MCF 10A (cell line): ENCODE measurements at regions of chr4 and their contacts with region 1.

Region 1: GRCh38 chr4:48109413-48110263 is 24.4 kb downstream of the TXK start:
- DNase-seq: peak; percentile 72
- H3K4me3 Mint-ChIP-seq: no peak overlapping the region
- H3K27ac Mint-ChIP-seq: no peak overlapping the region
- H3K4me1 Mint-ChIP-seq: no peaks in the 10 kb centered on the region
- H3K27me3 Mint-ChIP-seq: no peaks in the 10 kb centered on the region
- CTCF ChIP-seq: peak; percentile 56

Region 2: GRCh38 chr4:48033825-48034413 is 75.7 kb before region 1 on chr4:
- CTCF ChIA-PET with region 1: interaction called, 11 read pairs
- POLR2A ChIA-PET with region 1: no interaction called
- intact Hi-C with region 1: no loop called
- DNase-seq: peak; percentile 50
- H3K4me3 Mint-ChIP-seq: no peak overlapping the region
- H3K27ac Mint-ChIP-seq: no peak overlapping the region
- H3K4me1 Mint-ChIP-seq: no peaks in the 10 kb centered on the region
- H3K27me3 Mint-ChIP-seq: no peaks in the 10 kb centered on the region
- CTCF ChIP-seq: peak; percentile 40

Region 3: DNA sequence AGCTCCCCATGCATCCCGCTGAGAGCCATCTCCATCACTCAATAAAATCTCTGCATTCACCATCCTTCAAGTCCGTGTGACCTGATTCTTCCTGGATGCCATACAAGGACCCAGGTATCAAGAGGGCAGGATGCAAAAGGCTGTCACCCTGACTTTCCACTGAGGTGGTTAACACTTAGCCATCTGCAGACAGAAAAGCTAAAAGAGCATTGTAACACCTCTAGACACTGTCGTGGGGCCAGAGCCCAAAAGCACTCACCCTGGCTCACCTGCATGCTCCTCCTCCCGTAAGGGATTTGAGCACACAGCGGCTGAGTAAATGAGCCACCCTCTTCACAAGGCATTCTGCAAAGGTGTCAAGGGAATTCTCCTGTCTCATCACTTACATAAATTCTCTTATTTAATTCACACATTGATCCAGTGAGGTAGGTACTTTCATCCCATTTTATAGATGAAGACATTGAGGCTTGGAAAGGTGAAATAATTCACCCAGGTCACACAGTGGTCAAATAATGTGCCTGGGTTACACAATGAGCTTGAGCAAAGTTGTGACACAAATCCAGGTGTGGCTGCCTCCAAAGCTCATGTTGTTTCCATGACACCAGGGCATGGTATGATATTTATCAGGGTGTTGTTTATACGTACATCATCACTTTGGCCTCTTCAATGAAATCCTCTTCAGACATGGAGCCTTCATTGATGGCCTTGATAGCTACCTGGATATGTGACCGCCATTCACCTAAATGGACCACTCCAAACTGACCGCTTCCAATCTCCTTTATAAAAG is 23.6 kb before region 1 on chr4:
- CTCF ChIA-PET with region 1: interaction called, 13 read pairs
- POLR2A ChIA-PET with region 1: no interaction called
- intact Hi-C with region 1: no loop called
- DNase-seq: peak; percentile 17
- H3K4me3 Mint-ChIP-seq: no peak overlapping the region
- H3K27ac Mint-ChIP-seq: no peak overlapping the region
- H3K4me1 Mint-ChIP-seq: peaks cover 6% of the 10 kb centered on the region
- H3K27me3 Mint-ChIP-seq: no peaks in the 10 kb centered on the region
- CTCF ChIP-seq: no peak

Region 4: DNA sequence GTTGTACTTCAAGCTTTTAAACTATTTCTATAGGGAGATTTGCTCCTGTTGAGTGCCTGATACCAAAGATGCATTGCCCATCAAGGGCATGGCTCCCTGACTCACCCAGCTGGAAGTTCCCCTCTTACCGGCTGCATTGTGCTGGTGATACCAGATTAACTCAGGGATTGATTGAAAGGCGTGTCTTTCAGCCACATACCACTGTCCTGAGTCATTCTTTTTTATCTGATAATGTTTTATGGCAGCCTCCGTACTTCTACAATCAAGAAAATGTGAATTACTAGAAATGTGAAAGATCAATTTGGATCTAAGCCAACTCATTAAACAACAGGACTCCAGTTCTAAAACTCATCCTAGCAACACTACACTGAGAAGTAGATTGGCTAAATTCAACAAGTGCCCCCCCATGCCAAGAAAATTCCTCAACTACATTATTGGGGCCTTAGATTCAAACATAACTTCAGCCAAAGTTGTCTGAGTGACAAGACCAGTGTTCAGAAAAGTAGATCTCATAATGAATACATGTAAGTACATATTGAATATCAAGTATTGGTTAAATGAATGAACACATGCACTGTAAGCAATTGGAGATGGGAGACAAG is 15.6 kb before region 1 on chr4:
- CTCF ChIA-PET with region 1: interaction called, 43 read pairs
- POLR2A ChIA-PET with region 1: no interaction called
- intact Hi-C with region 1: no loop called
- DNase-seq: peak; percentile 45
- H3K4me3 Mint-ChIP-seq: no peak overlapping the region
- H3K27ac Mint-ChIP-seq: no peak overlapping the region
- H3K4me1 Mint-ChIP-seq: peaks cover 8% of the 10 kb centered on the region
- H3K27me3 Mint-ChIP-seq: no peaks in the 10 kb centered on the region
- CTCF ChIP-seq: no peak

Region 5: DNA sequence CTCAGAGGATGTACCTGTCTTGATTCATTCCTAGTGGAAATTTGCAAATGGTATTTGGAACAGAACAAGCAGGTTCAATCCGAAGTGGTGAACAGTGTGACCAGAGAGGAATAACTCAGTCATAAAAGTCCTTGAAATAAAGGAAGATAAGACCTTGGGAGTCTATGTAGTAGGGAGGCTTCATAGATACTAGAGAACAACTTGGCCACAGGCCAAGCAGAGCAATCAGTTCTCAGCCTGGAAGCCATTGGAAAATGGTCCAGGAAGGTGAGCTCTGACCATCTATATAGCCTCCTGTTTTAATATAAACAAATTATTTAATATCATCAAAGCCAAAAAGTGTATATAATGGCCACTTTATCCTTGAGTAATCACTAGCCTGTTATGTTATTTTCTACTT is 13.1 kb after region 1 on chr4:
- CTCF ChIA-PET with region 1: interaction called, 19 read pairs
- POLR2A ChIA-PET with region 1: interaction called, 3 read pairs
- intact Hi-C with region 1: no loop called
- DNase-seq: peak; percentile 3
- H3K4me3 Mint-ChIP-seq: no peak overlapping the region
- H3K27ac Mint-ChIP-seq: no peak overlapping the region
- H3K4me1 Mint-ChIP-seq: no peaks in the 10 kb centered on the region
- H3K27me3 Mint-ChIP-seq: no peaks in the 10 kb centered on the region
- CTCF ChIP-seq: no peak

Region 6: DNA sequence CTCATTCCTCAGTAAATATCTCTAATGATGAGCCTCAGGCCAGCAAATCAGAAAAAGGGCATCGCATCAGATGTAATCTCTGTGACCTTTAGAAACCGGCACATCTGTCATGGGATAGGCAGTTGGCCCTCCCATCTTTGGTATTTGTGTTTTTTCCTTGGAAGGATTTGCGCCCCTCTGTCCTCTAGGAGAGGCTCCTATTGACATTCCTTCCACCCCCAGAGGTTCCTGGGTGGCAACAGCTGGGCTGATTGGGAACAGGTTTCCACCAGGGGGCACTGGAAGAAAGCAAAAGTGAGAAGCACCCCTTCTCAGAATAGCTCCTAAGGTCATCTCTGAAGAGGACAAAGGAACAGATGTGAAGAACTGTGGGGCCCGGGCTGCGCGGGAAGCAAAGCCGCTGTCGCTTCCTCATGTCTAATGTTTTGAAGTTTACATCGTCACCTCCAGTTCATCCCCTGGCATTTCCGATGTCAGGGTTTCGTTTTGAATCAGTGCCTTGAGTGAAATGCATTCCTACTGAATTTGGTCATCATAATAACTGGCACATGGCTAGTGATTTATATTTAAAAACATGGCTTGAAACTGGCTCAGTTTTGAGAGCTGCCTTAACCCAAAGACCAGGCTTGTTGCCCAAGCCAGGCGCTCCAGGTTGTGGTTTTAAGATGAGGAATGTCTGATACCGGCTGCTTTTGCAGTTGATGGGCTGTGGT is 18.2 kb after region 1 on chr4:
- CTCF ChIA-PET with region 1: interaction called, 19 read pairs
- POLR2A ChIA-PET with region 1: interaction called, 4 read pairs
- intact Hi-C with region 1: no loop called
- DNase-seq: peak; percentile 83
- H3K4me3 Mint-ChIP-seq: peak overlapping the region; percentile 70
- H3K27ac Mint-ChIP-seq: peak overlapping the region; percentile 57
- H3K4me1 Mint-ChIP-seq: peaks cover 9% of the 10 kb centered on the region
- H3K27me3 Mint-ChIP-seq: no peaks in the 10 kb centered on the region
- CTCF ChIP-seq: peak; percentile 52

Region 7: DNA sequence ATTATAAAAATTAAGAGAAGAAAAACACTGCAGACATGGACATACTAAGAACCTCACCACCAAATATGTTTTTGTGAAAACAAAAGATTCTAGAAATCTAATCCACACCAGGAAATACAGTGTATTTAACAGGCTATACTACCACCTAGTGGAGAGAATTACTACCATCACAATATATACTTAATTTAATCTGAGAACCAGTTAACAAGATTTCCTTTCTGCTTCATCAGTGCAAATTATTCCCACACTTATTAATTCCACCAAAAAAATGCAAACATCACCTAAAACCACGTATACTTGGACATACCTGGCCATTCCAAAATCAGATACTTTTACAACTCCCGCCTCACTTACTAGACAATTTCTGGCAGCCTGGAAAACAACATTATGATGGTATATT is 31.4 kb after region 1 on chr4:
- CTCF ChIA-PET with region 1: interaction called, 16 read pairs
- POLR2A ChIA-PET with region 1: no interaction called
- intact Hi-C with region 1: no loop called
- DNase-seq: peak; percentile 48
- H3K4me3 Mint-ChIP-seq: no peak overlapping the region
- H3K27ac Mint-ChIP-seq: no peak overlapping the region
- H3K4me1 Mint-ChIP-seq: peaks cover 6% of the 10 kb centered on the region
- H3K27me3 Mint-ChIP-seq: no peaks in the 10 kb centered on the region
- CTCF ChIP-seq: peak; percentile 43